Aorta (tissue), 5 donors: ENCODE measurements at regions of chr15 and their contacts with region 1.

Region 1: GRCh38 chr15:71103102-71103676 is 12.1 kb upstream of the THSD4 start:
- DNase-seq: peak in 1 of 2 donors; percentile 50
- ATAC-seq: peak; percentile 73
- H3K4me3 ChIP-seq: no peak overlapping the region
- H3K27ac ChIP-seq: no peak overlapping the region
- H3K4me1 ChIP-seq: no peaks in the 10 kb centered on the region
- H3K27me3 ChIP-seq: no peaks in the 10 kb centered on the region

Region 2: DNA sequence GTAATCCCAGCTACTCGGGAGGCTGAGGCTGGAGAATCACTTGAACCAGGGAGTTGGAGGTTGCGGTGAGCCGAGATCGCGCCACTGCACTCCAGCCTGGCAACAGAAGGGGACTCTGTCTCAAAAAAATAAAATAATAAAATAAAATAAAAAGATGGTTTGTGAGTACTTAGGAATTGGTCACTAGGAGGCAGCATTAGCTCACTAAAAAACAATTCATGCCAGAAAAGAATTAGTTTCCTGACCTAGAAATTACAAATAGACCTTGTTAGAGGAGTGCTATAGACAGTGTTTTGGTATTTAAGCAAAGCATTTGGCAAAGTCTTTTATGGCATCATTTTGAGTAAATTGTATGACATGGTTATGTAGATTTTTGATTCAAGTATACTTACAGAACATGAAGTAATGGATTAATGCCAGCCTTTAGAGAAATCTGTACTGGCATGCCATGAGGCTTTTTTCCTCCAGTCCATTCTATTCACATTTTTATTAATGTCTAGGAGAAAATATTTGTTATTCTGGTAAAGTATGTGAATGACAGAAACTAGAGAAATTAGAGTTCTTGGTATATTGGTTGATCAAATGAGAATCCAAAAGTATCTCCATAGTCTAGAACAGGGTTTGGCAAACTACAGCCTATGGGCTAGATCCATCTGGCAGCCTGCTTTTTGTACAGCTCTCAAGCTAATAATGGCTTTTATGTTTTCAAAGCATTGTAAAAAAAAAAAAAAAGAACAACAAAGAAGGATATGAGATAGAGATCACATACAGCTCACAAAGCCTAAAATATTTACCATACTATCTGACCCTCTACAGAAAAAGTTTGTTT is 129.0 kb before region 1 on chr15:
- intact Hi-C with region 1: loop called in 1 of 2 experiments (anchors 10 kb)
- DNase-seq: no peak
- ATAC-seq: no peak
- H3K4me3 ChIP-seq: no peak overlapping the region
- H3K27ac ChIP-seq: no peak overlapping the region
- H3K4me1 ChIP-seq: no peaks in the 10 kb centered on the region
- H3K27me3 ChIP-seq: no peaks in the 10 kb centered on the region

Region 3: DNA sequence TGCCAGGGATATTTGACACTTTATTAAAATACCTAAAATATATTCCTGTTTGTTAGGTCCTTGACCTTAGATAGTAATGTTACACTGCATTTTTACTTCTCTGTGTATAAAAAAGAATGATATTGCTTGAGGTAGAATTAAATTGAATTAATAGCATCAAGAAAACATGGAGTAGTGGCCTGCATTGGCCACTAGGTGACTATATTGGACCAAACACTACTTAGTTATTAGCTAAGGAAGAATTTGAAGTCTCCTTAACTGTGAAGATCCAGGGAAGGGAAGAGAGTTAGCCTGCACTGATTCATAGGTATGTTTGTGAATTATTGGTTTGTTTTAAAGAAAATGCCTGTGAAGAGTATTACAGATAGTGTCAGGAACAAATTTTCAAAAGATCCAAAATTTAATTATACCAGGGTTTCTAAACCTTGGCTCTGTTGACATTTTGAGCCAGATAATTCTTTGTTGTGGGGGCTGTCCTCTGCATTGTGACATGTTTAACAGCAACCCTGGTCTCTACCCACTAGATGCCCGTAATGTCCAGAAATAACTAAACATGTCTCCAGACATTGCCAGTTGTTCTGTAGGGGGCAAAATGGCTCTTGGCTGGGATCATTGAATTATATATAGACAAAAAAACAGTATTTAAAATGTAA is 91.6 kb before region 1 on chr15:
- intact Hi-C with region 1: loop called (anchors 2 kb)
- DNase-seq: no peak
- ATAC-seq: no peak
- H3K4me3 ChIP-seq: no peak overlapping the region
- H3K27ac ChIP-seq: no peak overlapping the region
- H3K4me1 ChIP-seq: no peaks in the 10 kb centered on the region
- H3K27me3 ChIP-seq: no peaks in the 10 kb centered on the region